K562 (cell line): ENCODE measurements at regions of chr18 and their contacts with region 1.

Region 1: GRCh38 chr18:59899298-59900221 is at the start of gene PMAIP1:
- DNase-seq: peak; percentile 81 to 87 (median 83)
- ATAC-seq: peak; percentile 90
- H3K4me3 ChIP-seq: peak within 1 kb of the TSS; percentile 85
- H3K27ac ChIP-seq: peak within 1 kb of the TSS; percentile 71
- H3K4me1 ChIP-seq: peaks cover 7 to 14% of the 10 kb centered on the region in 2 experiments; a peak in 4 of 5 replicates
- H3K27me3 ChIP-seq: no peaks in the 10 kb centered on the region
- CTCF ChIP-seq: no peak
- EP300 ChIP-seq: no peak
- POLR2A ChIP-seq: peak; percentile 90
- RAD21 ChIP-seq: no peak
- polyA plus RNA-seq, gene PMAIP1: 10.0 to 14.9 TPM

Region 2: GRCh38 chr18:58386780-58387179 is 1512.8 kb before region 1 on chr18:
- CTCF ChIA-PET with region 1: no interaction called
- POLR2A ChIA-PET with region 1: no interaction called
- in situ Hi-C with region 1: no loop called
- intact Hi-C with region 1: no loop called
- DNase-seq: no peak
- ATAC-seq: no peak
- H3K4me3 ChIP-seq: no peak overlapping the region
- H3K27ac ChIP-seq: no peak overlapping the region
- H3K4me1 ChIP-seq: no peaks in the 10 kb centered on the region
- H3K27me3 ChIP-seq: no peaks in the 10 kb centered on the region
- CTCF ChIP-seq: no peak
- EP300 ChIP-seq: no peak
- POLR2A ChIP-seq: no peak
- RAD21 ChIP-seq: no peak

Region 3: DNA sequence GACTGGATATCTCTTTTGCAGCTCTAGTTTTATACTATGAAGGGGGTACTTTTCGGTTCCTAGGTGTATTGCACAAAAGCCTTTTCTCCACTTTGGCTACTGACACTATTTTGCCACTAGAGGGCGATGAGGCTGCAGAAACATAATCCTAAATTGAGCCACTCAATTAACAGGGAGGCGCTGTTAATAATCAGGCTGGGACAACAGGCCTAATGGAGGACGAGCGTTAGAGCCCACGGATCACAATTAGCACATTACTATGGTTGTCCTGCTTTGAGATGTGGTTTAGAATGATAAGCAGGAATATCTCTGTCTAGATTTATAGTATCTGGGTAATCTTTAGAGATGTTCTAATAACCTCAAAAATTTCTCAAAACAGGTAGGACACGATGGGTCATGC is 62.0 kb before region 1 on chr18:
- CTCF ChIA-PET with region 1: no interaction called
- POLR2A ChIA-PET with region 1: interaction called, 3 read pairs
- in situ Hi-C with region 1: no loop called
- intact Hi-C with region 1: loop called (anchors 2 kb)
- DNase-seq: peak; percentile 47 to 68 (median 48)
- ATAC-seq: peak; percentile 89
- H3K4me3 ChIP-seq: no peak overlapping the region
- H3K27ac ChIP-seq: no peak overlapping the region
- H3K4me1 ChIP-seq: no peaks in the 10 kb centered on the region; a peak in 1 of 5 replicates
- H3K27me3 ChIP-seq: no peaks in the 10 kb centered on the region
- CTCF ChIP-seq: peak; percentile 75 to 79 (median 78)
- EP300 ChIP-seq: no peak
- POLR2A ChIP-seq: no peak
- RAD21 ChIP-seq: peak; percentile 72 to 83

Region 4: GRCh38 chr18:59874166-59874565 is 25.4 kb before region 1 on chr18:
- CTCF ChIA-PET with region 1: no interaction called
- POLR2A ChIA-PET with region 1: interaction called, 15 read pairs
- in situ Hi-C with region 1: no loop called
- intact Hi-C with region 1: no loop called
- DNase-seq: peak in 1 of 4 experiments; percentile 24
- ATAC-seq: peak; percentile 52; the same call in 2 of the 3 replicates
- H3K4me3 ChIP-seq: no peak overlapping the region
- H3K27ac ChIP-seq: no peak overlapping the region
- H3K4me1 ChIP-seq: no peaks in the 10 kb centered on the region; a peak in 3 of 5 replicates
- H3K27me3 ChIP-seq: no peaks in the 10 kb centered on the region
- CTCF ChIP-seq: no peak
- EP300 ChIP-seq: no peak
- POLR2A ChIP-seq: no peak
- RAD21 ChIP-seq: no peak

Region 5: GRCh38 chr18:59885579-59886163 is 13.9 kb before region 1 on chr18:
- CTCF ChIA-PET with region 1: no interaction called
- POLR2A ChIA-PET with region 1: interaction called, 22 read pairs
- in situ Hi-C with region 1: no loop called
- intact Hi-C with region 1: no loop called
- DNase-seq: no peak
- ATAC-seq: no peak
- H3K4me3 ChIP-seq: no peak overlapping the region
- H3K27ac ChIP-seq: no peak overlapping the region
- H3K4me1 ChIP-seq: peaks cover 8 to 24% of the 10 kb centered on the region in 2 experiments; a peak in 4 of 5 replicates
- H3K27me3 ChIP-seq: no peaks in the 10 kb centered on the region
- CTCF ChIP-seq: no peak
- EP300 ChIP-seq: no peak
- POLR2A ChIP-seq: no peak
- RAD21 ChIP-seq: no peak

Region 6: GRCh38 chr18:59918320-59918755 is 18.8 kb after region 1 on chr18:
- CTCF ChIA-PET with region 1: no interaction called
- POLR2A ChIA-PET with region 1: interaction called, 15 read pairs
- in situ Hi-C with region 1: no loop called
- intact Hi-C with region 1: no loop called
- DNase-seq: peak; percentile 33 to 85 (median 54)
- ATAC-seq: peak; percentile 86
- H3K4me3 ChIP-seq: no peak overlapping the region
- H3K27ac ChIP-seq: peak overlapping the region; percentile 62
- H3K4me1 ChIP-seq: peaks cover 3 to 21% of the 10 kb centered on the region in 2 experiments; a peak in 4 of 5 replicates
- H3K27me3 ChIP-seq: no peaks in the 10 kb centered on the region
- CTCF ChIP-seq: no peak
- EP300 ChIP-seq: peak; percentile 74; the same call in 1 of the 2 replicates
- POLR2A ChIP-seq: no peak
- RAD21 ChIP-seq: no peak

Region 7: DNA sequence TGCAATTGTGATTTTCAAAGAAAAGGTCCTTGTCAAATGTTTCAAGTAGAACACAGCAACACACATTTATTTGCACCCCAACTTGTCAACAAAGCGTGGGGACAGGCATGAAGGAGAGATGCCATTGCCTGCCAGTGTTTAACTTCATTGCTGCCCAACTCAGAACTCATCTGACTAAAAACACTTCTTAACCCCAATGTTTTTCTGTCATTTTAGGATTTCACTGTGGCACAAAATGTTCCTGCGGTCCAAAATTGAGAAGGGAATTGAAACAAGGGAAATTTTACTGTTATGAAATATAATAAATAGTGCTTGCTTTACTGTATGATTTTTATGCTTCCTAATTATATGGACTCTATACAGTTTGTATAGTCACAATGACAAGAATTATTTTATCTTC is 46.0 kb after region 1 on chr18:
- CTCF ChIA-PET with region 1: no interaction called
- POLR2A ChIA-PET with region 1: interaction called, 12 read pairs
- in situ Hi-C with region 1: no loop called
- intact Hi-C with region 1: no loop called
- DNase-seq: no peak
- ATAC-seq: no peak
- H3K4me3 ChIP-seq: no peak overlapping the region
- H3K27ac ChIP-seq: no peak overlapping the region
- H3K4me1 ChIP-seq: no peaks in the 10 kb centered on the region
- H3K27me3 ChIP-seq: no peaks in the 10 kb centered on the region
- CTCF ChIP-seq: no peak
- EP300 ChIP-seq: no peak
- POLR2A ChIP-seq: no peak
- RAD21 ChIP-seq: no peak